Astrocyte of the spinal cord (primary cell): ENCODE measurements at regions of chr1 and their contacts with region 1.

Region 1: DNA sequence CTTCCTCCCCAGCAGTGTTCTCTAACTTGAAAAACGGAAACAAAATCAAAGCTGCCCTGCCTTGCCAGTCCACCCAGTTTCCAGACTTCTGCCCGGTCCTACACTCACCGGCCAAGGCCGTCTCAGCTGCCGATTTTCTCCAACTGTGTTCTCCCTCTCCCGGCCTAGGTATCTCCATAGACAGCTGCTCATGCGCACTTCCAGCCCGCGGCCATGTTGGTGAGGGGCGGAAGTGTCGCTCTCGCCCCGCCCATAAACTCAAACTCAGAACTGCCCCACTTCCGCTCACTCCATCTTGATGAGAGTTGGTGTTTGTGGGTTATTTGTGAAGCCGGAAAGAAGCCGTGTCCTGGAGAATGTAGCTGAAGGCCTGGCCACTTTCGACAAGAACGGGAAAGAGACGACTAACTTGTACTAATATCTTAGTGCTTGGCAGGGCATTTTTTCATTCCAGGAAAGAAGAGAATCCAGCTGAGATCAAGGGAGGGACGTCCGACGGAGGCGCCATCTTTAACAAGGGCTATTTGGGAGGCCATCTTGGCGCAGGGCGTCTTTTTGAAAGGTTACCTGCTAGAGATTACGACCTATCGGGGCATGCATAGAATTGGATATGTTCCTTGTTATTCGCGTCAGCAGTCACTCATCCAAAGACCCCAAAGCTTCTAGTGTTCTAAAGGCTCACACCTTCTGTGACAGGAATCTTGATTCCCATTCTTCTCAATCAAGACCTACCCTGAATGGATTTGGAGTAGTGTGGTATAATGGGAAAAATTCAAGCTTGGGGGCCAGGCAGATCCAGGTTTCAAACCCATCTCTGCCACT is at the start of gene USF1:
- DNase-seq: peak; percentile 98
- H3K4me3 ChIP-seq: peak within 1 kb of the TSS; percentile 85
- CTCF ChIP-seq: no peak

Region 2: DNA sequence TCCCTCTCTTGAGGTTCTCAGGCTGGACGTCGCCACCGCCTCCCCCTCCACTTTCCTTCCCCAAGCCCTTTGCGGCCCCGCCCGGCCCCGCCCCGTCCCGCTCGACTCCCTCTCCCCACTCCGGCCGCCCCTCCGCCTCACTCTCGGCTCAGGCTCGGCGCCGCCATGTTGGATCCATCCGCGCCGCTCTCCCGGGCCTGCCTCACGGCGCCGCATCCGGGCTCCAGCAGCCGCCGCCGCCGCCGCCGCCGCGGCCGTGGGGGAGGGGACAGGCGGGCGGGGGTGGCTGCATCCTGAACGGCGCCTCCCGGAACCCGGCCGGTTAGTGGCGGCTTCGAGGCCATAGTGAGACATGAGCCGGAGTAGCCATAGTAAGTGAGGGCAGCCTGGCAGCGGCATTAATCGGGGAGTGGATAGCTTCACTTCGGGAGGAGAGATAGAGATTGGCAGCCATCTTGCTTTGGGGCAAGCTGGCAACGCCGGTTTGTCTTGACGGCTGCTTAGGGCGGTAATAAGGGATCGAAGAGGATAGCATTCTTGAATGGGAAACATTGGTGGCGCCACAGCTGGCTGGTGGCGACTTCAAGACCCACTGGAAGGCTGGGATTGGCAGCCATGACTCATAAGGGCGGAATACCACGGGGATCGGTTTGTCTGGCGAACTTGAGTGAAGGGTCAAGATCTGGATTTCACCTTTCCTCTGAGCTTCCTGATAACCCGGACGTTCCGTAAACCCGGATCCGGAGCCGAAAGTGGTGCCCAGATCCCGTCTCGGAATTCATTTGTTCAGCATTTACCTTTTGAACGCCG is 86.7 kb after region 1 on chr1 and contains the start of gene DEDD:
- in situ Hi-C with region 1: loop called (anchors 25 kb)
- DNase-seq: peak; percentile 97
- H3K4me3 ChIP-seq: peak within 1 kb of the TSS; percentile 86
- CTCF ChIP-seq: no peak